A673 (cell line): ENCODE measurements at regions of chr1 and their contacts with region 1.

Region 1: GRCh38 chr1:30085811-30086770 is 637.3 kb downstream of the MATN1 start:
- DNase-seq: peak; percentile 84
- H3K4me3 ChIP-seq: peak overlapping the region; percentile 20
- H3K27ac ChIP-seq: peak overlapping the region; percentile 44
- H3K4me1 ChIP-seq: peaks cover 54% of the 10 kb centered on the region
- H3K27me3 ChIP-seq: no peaks in the 10 kb centered on the region
- CTCF ChIP-seq: peak; percentile 92

Region 2: DNA sequence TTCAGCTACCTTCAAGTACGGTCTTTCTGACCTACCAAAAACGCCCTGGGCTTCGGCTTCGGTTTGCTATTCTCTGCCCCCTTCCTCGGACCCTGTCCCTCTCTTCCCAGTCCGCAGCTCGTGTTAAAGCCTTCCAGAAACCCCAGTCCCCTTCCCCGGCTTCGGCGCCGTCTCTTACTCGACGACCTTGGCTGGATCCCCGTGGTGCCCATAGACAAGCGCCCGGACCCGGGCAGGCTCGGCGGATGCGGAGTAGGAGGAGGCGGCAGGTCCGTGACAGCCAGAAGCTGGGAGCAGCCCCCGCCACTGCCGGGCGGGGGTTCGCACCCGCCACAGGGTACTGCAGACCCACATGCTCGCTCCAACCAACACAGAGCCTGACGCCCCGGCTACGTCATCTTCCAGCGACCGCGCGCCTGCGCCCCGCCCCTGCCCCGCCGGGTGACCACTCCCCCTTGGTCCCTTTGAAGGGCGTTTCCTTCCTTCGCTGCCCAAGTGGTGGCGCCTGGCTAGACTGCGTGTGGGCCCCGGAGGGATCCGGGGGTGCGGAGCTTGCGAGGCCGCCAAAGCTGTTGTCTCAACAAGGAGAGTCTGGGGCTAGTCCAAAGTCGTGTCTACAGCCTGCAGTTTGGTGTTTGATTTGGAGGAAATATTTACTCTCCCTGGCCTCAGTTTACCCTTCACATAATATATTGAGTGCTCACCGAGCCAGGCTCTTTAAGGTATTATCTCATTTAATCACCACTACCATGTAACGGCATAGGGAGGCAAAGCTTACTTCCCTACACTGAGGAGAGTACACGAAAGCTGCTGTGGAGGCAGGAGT is 855.3 kb before region 1 on chr1 and contains the start of gene MECR:
- CTCF ChIA-PET with region 1: no interaction called
- POLR2A ChIA-PET with region 1: no interaction called
- intact Hi-C with region 1: loop called (anchors 10 kb)
- DNase-seq: peak; percentile 95
- H3K4me3 ChIP-seq: peak within 1 kb of the TSS; percentile 84
- H3K27ac ChIP-seq: peak within 1 kb of the TSS; percentile 81
- H3K4me1 ChIP-seq: peaks cover 12% of the 10 kb centered on the region
- H3K27me3 ChIP-seq: no peaks in the 10 kb centered on the region
- CTCF ChIP-seq: peak; percentile 43; the same call in 1 of the 2 replicates
- total RNA-seq, gene MECR: 39.0 and 39.3 TPM in 2 replicates

Region 3: DNA sequence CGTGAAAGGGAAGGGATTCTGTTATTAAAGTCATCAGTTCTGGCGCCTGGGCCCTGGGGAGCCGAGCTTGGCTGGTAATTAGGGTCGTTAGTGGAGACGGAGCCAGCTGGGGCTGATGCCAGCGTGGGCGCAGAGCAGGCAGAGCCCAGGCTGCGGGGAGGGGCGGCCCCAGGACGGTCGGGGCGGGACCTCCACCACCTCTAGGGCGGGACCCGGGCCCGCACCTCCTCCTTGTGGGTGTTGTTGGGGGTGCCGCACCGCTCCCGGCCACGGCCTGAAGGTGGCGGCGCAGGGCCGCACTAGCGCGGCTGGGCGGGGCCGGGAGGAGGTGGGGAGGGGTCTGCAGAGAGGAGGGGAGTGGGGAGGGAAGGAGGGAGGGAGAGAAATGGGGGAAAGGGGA is 379.1 kb before region 1 on chr1:
- CTCF ChIA-PET with region 1: interaction called, 5 read pairs
- POLR2A ChIA-PET with region 1: no interaction called
- intact Hi-C with region 1: loop called (anchors 5 kb)
- DNase-seq: peak; percentile 94
- H3K4me3 ChIP-seq: no peak overlapping the region
- H3K27ac ChIP-seq: peak overlapping the region; percentile 21
- H3K4me1 ChIP-seq: peaks cover 36% of the 10 kb centered on the region
- H3K27me3 ChIP-seq: no peaks in the 10 kb centered on the region
- CTCF ChIP-seq: peak; percentile 81

Region 4: GRCh38 chr1:29912425-29912824 is 173.7 kb before region 1 on chr1:
- CTCF ChIA-PET with region 1: interaction called, 5 read pairs
- POLR2A ChIA-PET with region 1: no interaction called
- intact Hi-C with region 1: loop called (anchors 10 kb)
- DNase-seq: peak; percentile 52
- H3K4me3 ChIP-seq: no peak overlapping the region
- H3K27ac ChIP-seq: no peak overlapping the region
- H3K4me1 ChIP-seq: no peaks in the 10 kb centered on the region
- H3K27me3 ChIP-seq: no peaks in the 10 kb centered on the region
- CTCF ChIP-seq: peak; percentile 53

Region 5: DNA sequence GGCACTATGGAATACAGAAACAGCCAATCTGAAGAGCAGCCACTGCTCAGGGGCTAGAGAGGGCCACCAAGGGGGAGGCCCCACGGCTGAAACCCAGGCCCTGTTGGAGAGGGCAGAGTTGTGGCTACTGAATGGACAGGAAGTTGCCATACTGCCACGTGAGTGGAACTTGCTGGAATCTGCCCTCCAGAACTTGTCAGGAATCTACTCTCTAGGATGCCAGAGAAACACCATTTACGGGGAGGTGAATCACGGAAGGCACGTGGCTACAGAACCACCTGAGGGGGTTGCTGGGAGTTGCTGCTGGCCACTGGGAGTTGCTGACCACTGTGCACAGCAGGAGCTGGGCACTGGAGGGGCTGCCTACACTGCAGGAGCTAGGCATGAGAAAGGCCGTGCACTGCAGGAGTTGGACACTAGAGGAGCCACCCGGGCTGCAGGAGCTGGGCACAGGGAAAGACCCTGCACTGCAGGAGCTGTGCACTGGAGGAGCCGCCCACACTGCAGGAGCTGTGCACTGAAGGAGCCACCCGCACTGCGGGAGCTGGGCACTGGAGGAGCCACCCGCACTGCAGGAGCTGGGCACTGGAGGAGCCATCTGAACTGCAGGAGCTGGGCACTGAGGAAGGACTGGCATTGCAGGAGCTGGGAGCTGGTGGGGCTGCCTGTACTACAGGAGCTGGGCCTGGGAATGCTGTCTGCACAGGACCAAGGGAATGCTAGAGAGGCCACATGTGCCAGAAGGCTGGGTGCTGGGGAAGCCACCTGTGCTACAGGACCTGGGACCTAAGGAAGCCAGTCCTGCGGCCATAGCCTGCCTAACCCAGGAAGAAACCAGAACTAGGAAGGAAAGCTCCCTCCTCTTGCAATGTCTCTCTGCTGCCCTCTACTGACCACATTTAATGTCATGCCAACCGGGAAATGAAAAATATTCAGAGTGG is 293.9 kb after region 1 on chr1:
- CTCF ChIA-PET with region 1: interaction called, 9 read pairs
- POLR2A ChIA-PET with region 1: no interaction called
- intact Hi-C with region 1: loop called (anchors 1 kb)
- DNase-seq: peak; percentile 87
- H3K4me3 ChIP-seq: no peak overlapping the region
- H3K27ac ChIP-seq: peak overlapping the region; percentile 73
- H3K4me1 ChIP-seq: peaks cover 60% of the 10 kb centered on the region
- H3K27me3 ChIP-seq: no peaks in the 10 kb centered on the region
- CTCF ChIP-seq: peak; percentile 81

Region 6: DNA sequence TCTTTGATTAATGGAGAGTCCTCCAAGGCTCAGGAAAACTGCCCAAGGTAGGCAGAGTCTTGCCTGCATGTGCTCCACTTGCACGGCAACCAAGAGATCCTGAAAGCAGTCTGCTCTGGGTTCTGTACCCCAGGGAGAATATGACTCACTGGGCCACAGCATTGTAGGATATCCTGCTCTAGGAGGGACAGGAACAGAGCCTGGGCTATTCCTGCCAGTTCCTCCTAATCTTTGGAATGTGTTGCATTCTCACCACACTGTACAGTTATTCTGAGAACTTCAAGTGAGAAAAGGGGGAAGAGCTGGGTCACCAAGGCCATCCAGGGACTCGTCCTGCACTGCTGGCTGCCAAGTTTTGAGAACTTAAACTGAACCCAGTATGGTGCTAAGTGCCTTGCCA is 358.8 kb after region 1 on chr1:
- CTCF ChIA-PET with region 1: no interaction called
- POLR2A ChIA-PET with region 1: no interaction called
- intact Hi-C with region 1: no loop called
- DNase-seq: peak; percentile 18
- H3K4me3 ChIP-seq: no peak overlapping the region
- H3K27ac ChIP-seq: no peak overlapping the region
- H3K4me1 ChIP-seq: no peaks in the 10 kb centered on the region
- H3K27me3 ChIP-seq: no peaks in the 10 kb centered on the region
- CTCF ChIP-seq: no peak